ENCODE measurements at regions of chr6 and their contacts with region 1.

Region 1: GRCh38 chr6:151723152-151723551 is 84.3 kb upstream of the ESR1 start:
- DNase-seq: no peak
- H3K4me3 Mint-ChIP-seq: no peak overlapping the region
- H3K27ac Mint-ChIP-seq: no peak overlapping the region
- H3K4me1 Mint-ChIP-seq: peaks cover 21% of the 10 kb centered on the region
- H3K27me3 Mint-ChIP-seq: peaks cover 20% of the 10 kb centered on the region

Region 2: DNA sequence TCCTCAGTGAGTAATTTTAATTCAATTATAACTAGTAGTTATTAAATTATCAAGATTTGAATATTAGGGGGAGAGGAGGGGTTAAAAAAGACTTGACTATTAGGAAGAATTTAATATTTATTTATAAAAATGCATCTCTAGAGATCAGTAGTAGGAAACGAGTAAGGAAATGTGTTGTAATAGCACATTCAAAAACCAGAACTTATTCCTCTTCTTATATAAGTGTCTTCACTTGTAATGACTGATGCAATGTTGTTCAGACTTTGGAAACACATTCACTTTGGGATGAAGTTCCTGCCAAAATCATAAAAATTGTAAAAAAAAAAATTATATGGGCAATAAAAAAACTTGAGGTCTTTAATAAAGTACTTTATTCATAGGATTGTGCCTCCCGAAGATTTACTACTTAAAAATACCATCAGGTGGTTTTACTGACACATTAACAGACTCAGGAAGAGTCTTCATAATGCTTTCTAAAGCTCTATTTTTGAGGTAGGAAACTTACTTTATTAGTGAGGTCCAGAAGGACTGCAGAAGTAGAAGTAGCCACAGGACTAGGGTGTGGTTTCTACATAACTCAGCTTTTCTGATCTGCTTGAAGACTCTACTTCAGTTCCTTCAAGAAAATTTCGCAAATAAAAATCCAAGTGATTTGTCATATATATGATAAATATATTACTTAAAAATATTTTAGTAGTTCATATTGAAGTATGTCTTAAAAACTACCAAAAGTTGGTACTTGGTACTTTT is 169.6 kb before region 1 on chr6:
- intact Hi-C with region 1: no loop called
- DNase-seq: no peak
- H3K4me3 Mint-ChIP-seq: no peak overlapping the region
- H3K27ac Mint-ChIP-seq: no peak overlapping the region
- H3K4me1 Mint-ChIP-seq: peaks cover 3% of the 10 kb centered on the region
- H3K27me3 Mint-ChIP-seq: no peaks in the 10 kb centered on the region

Region 3: DNA sequence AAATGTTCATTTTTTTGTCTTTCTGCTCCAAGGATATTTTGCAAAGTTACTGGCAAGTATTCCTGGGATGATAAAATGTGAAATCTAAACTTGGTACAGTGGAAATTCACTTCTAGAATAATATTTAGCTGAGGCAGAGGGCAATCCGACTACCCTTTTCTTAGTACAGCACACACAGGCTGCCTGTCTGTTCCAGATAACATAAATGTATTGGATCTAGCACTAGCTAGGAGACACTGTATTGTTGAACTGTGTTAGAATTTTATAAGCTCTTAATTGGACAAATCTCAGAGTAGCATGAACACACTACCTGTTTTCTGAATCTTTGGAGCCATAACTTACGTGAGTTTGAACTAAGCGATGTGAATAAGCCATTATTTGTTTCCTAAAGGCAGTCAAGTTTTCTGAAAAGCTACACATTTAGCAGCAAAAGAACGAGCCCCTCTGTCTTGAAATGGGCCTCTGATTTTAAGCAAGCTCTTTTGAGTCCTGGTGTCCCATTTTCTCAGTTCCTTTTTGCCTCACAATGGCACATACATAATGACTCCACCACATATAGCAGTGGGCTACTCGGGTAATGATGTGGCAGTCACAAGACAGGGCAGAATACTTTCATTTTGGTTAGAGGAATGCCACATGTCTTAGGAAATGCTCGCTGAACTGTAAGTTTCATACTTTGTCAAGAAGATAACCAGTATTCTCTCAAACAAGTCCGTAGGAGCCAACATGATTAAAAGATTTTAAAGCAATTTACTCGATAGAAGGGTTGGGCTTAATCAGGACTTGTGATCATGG is 32.2 kb before region 1 on chr6:
- intact Hi-C with region 1: loop called (anchors 1 kb)
- DNase-seq: no peak
- H3K4me3 Mint-ChIP-seq: peak overlapping the region; percentile 51
- H3K27ac Mint-ChIP-seq: no peak overlapping the region
- H3K4me1 Mint-ChIP-seq: peaks cover 17% of the 10 kb centered on the region
- H3K27me3 Mint-ChIP-seq: peaks cover 12% of the 10 kb centered on the region

Region 4: GRCh38 chr6:151702851-151703611 is 20.1 kb before region 1 on chr6:
- intact Hi-C with region 1: loop called (anchors 1 kb)
- DNase-seq: no peak
- H3K4me3 Mint-ChIP-seq: no peak overlapping the region
- H3K27ac Mint-ChIP-seq: no peak overlapping the region
- H3K4me1 Mint-ChIP-seq: peaks cover 25% of the 10 kb centered on the region
- H3K27me3 Mint-ChIP-seq: peaks cover 21% of the 10 kb centered on the region

Region 5: DNA sequence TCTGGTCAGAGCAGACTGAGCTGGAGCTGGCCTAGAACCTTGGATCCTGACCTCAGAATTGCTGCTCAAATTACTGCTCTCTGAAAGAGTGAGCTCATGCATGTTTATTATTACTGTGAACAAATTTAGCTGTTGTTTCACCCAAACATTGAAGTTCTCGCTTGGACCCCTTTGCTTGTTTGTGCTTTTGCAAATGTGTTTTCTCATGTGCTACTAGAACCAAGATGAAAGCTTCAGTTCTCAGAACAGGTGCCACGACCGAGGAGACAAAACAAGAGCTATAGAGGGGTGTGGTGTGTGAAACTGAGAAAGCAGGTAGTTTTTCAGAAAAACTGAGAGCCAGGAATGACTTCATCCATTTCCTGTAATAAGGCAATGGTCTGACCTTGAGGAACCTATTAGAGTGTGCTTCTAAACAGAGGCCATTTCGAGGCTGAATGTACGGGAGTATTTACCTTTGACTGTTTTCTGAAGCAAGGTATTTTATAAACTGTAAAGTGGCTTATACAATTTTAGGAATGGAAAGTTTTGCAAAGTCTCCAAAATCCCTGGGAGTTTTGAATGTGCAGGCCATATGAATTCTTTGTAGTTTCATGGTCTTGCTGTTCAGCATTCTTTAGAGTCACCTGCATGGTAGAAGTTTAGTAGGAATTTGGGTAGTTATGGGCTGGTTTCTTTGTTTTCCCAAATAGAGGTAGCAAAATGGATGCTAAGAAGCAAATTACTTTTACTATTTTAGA is 34.5 kb after region 1 on chr6:
- intact Hi-C with region 1: loop called (anchors 2 kb)
- DNase-seq: peak; percentile 19
- H3K4me3 Mint-ChIP-seq: no peak overlapping the region
- H3K27ac Mint-ChIP-seq: peak overlapping the region; percentile 41
- H3K4me1 Mint-ChIP-seq: peaks cover 33% of the 10 kb centered on the region
- H3K27me3 Mint-ChIP-seq: peaks cover 5% of the 10 kb centered on the region

Region 6: GRCh38 chr6:152301764-152302568 is 578.8 kb after region 1 on chr6:
- intact Hi-C with region 1: loop called (anchors 1 kb)
- DNase-seq: peak; percentile 86
- H3K4me3 Mint-ChIP-seq: peak overlapping the region; percentile 99
- H3K27ac Mint-ChIP-seq: peak overlapping the region; percentile 99
- H3K4me1 Mint-ChIP-seq: peaks cover 22% of the 10 kb centered on the region
- H3K27me3 Mint-ChIP-seq: no peaks in the 10 kb centered on the region